ENCODE measurements at regions of chr4 and their contacts with region 1.

Region 1: GRCh38 chr4:184263910-184264732 is 46.4 kb upstream of the ENPP6 start:
- DNase-seq: peak; percentile 93
- ATAC-seq: peak; percentile 42
- H3K4me3 ChIP-seq: no peak overlapping the region
- H3K4me3 Mint-ChIP-seq: peak overlapping the region; percentile 42
- H3K27ac ChIP-seq: peak overlapping the region in 1 of 2 donors; percentile 24
- H3K27ac Mint-ChIP-seq: peak overlapping the region; percentile 51
- H3K4me1 ChIP-seq: peaks cover 32 to 37% of the 10 kb centered on the region in 2 donors
- H3K4me1 Mint-ChIP-seq: peaks cover 41% of the 10 kb centered on the region
- H3K27me3 ChIP-seq: no peaks in the 10 kb centered on the region
- H3K27me3 Mint-ChIP-seq: no peaks in the 10 kb centered on the region
- CTCF ChIP-seq: peak; percentile 86

Region 2: GRCh38 chr4:183876268-183876934 is 387.7 kb before region 1 on chr4:
- CTCF ChIA-PET with region 1: no interaction called
- POLR2A ChIA-PET with region 1: no interaction called
- intact Hi-C with region 1: no loop called
- DNase-seq: no peak
- ATAC-seq: no peak
- H3K4me3 ChIP-seq: no peak overlapping the region
- H3K4me3 Mint-ChIP-seq: no peak overlapping the region
- H3K27ac ChIP-seq: no peak overlapping the region
- H3K27ac Mint-ChIP-seq: no peak overlapping the region
- H3K4me1 ChIP-seq: no peaks in the 10 kb centered on the region
- H3K4me1 Mint-ChIP-seq: no peaks in the 10 kb centered on the region
- H3K27me3 ChIP-seq: no peaks in the 10 kb centered on the region
- H3K27me3 Mint-ChIP-seq: peaks cover 12% of the 10 kb centered on the region
- CTCF ChIP-seq: no peak

Region 3: DNA sequence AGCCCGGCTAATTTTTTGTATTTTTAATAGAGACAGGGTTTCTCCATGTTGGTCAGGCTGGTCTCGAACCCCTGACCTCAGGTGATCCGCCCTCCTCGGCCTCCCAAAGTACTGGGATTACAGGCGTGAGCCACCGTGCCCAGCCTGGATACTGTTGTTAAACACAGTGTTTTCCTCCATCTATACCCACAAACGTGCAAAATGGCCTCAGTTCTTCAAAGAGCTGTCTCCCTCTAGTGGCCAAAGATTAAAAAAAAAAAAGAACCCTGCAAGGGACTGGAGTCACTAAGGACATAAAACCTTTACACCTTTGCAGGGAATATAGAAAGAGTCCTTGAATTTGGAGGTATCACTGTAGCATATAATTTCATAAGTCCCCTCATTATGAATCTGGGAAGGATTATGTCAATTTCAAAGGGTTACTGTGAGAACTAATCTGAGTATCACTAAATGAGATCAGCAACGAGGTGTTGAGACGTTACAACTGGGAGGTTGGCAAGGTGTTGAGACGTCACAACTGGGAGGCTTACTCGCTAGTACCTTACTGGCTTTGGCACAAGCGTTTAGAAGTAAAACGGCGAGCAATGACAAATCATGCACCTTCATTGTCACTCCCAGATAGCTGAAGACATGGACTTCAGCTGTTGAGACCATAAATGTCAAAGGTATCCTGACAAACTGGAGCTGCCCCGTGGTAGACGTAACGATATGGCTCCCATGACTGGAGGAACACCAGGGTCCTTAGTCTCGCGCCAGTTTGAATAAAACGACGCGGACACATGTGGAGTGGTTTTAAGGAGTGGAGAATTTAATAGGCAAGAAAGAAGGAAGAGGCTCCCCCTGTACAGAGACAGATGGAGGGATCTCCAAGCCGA is 13.1 kb before region 1 on chr4:
- CTCF ChIA-PET with region 1: interaction called, 20 read pairs
- POLR2A ChIA-PET with region 1: no interaction called
- intact Hi-C with region 1: no loop called
- DNase-seq: peak; percentile 66
- ATAC-seq: peak; percentile 57
- H3K4me3 ChIP-seq: no peak overlapping the region
- H3K4me3 Mint-ChIP-seq: no peak overlapping the region
- H3K27ac ChIP-seq: no peak overlapping the region
- H3K27ac Mint-ChIP-seq: no peak overlapping the region
- H3K4me1 ChIP-seq: no peaks in the 10 kb centered on the region
- H3K4me1 Mint-ChIP-seq: no peaks in the 10 kb centered on the region
- H3K27me3 ChIP-seq: peaks cover 0 to 2% (median 0%) of the 10 kb centered on the region in 4 experiments
- H3K27me3 Mint-ChIP-seq: peaks cover 5% of the 10 kb centered on the region
- CTCF ChIP-seq: peak; percentile 73

Region 4: DNA sequence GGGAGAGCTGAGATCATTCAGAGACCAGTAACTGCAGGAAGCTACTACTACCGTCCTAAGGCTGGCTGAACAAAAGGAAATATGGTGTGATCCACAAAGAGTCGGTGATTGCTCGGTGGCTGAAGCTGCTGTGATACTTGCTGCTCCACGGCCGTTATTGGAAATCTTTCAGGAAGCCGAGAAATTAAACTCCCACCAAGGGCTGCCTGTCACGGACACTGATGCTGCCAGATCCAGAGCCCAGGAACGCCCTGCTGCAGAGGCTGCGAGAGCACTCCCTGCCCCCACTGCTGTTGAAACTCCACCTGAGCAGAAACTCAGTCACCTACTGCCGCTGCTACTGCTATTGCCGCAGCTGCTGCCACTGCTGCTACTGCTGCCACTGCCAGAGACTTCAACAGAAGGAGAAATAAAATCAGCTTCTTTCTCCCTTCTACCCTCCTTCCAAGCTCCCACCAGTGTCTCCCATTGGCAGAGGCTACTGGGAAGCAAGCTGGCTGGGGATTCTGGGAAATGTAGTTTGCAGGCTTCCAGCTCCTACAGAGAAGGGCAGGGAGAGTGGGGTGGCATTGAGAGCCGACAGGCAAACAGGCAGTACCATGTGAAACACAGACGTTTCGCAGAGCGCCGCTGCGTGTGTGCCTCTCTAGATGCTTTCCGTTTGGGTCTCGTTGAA is 79.5 kb after region 1 on chr4:
- CTCF ChIA-PET with region 1: interaction called, 12 read pairs
- POLR2A ChIA-PET with region 1: interaction called, 4 read pairs
- intact Hi-C with region 1: loop called (anchors 5 kb)
- DNase-seq: peak; percentile 67
- ATAC-seq: peak; percentile 37
- H3K4me3 ChIP-seq: peak overlapping the region; percentile 55 to 70 (median 62)
- H3K4me3 Mint-ChIP-seq: peak overlapping the region; percentile 92
- H3K27ac ChIP-seq: peak overlapping the region; percentile 54 to 75
- H3K27ac Mint-ChIP-seq: peak overlapping the region; percentile 87
- H3K4me1 ChIP-seq: peaks cover 66 to 71% of the 10 kb centered on the region in 2 donors
- H3K4me1 Mint-ChIP-seq: peaks cover 68% of the 10 kb centered on the region
- H3K27me3 ChIP-seq: no peaks in the 10 kb centered on the region
- H3K27me3 Mint-ChIP-seq: no peaks in the 10 kb centered on the region
- CTCF ChIP-seq: no peak

Region 5: DNA sequence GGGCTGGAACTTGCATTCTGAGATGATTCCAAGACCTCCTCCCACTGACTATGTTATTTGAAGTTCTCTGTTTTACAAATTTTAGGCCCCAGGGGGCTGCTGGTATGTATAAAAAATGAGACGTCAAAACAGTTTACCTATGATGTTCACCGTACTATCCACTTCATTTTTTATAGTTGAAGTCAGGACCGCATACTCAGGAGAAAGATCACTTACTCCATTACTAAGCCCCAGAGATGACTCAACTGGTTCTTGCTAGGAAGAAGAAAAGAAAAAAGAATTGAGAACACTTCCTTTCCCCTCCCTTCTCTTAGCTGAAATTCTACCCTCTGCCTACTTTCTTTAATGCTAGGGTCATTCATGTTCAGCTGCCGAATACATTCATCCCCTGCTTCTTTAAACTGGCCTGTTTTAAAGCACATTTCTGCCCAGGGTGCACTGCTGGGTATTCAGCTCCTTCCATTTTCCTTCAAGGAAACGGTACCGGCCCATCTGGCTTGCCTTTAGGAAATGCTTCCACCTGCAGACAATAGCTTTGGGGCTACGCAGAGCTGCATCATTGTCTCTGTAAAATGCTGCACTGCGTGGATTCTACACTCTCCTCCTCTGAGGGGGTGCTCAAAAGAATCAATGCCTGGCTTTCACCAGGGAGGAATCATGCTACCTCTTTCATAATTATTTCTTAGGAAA is 144.0 kb after region 1 on chr4:
- CTCF ChIA-PET with region 1: interaction called, 17 read pairs
- POLR2A ChIA-PET with region 1: no interaction called
- intact Hi-C with region 1: no loop called
- DNase-seq: no peak
- ATAC-seq: no peak
- H3K4me3 ChIP-seq: no peak overlapping the region
- H3K4me3 Mint-ChIP-seq: no peak overlapping the region
- H3K27ac ChIP-seq: no peak overlapping the region
- H3K27ac Mint-ChIP-seq: peak overlapping the region; percentile 16
- H3K4me1 ChIP-seq: peaks cover 40 to 42% of the 10 kb centered on the region in 2 donors
- H3K4me1 Mint-ChIP-seq: peaks cover 55% of the 10 kb centered on the region
- H3K27me3 ChIP-seq: no peaks in the 10 kb centered on the region
- H3K27me3 Mint-ChIP-seq: no peaks in the 10 kb centered on the region
- CTCF ChIP-seq: no peak

Region 6: GRCh38 chr4:184506527-184507121 is 242.5 kb after region 1 on chr4:
- CTCF ChIA-PET with region 1: interaction called, 23 read pairs
- POLR2A ChIA-PET with region 1: no interaction called
- intact Hi-C with region 1: loop called (anchors 1 kb)
- DNase-seq: peak; percentile 82
- ATAC-seq: peak; percentile 99
- H3K4me3 ChIP-seq: peak overlapping the region in 1 of 5 experiments; percentile 24
- H3K4me3 Mint-ChIP-seq: peak overlapping the region; percentile 61
- H3K27ac ChIP-seq: peak overlapping the region; percentile 48 to 69
- H3K27ac Mint-ChIP-seq: peak overlapping the region; percentile 81
- H3K4me1 ChIP-seq: peaks cover 43 to 48% of the 10 kb centered on the region in 2 donors
- H3K4me1 Mint-ChIP-seq: peaks cover 45% of the 10 kb centered on the region
- H3K27me3 ChIP-seq: no peaks in the 10 kb centered on the region
- H3K27me3 Mint-ChIP-seq: no peaks in the 10 kb centered on the region
- CTCF ChIP-seq: peak; percentile 73

Region 7: DNA sequence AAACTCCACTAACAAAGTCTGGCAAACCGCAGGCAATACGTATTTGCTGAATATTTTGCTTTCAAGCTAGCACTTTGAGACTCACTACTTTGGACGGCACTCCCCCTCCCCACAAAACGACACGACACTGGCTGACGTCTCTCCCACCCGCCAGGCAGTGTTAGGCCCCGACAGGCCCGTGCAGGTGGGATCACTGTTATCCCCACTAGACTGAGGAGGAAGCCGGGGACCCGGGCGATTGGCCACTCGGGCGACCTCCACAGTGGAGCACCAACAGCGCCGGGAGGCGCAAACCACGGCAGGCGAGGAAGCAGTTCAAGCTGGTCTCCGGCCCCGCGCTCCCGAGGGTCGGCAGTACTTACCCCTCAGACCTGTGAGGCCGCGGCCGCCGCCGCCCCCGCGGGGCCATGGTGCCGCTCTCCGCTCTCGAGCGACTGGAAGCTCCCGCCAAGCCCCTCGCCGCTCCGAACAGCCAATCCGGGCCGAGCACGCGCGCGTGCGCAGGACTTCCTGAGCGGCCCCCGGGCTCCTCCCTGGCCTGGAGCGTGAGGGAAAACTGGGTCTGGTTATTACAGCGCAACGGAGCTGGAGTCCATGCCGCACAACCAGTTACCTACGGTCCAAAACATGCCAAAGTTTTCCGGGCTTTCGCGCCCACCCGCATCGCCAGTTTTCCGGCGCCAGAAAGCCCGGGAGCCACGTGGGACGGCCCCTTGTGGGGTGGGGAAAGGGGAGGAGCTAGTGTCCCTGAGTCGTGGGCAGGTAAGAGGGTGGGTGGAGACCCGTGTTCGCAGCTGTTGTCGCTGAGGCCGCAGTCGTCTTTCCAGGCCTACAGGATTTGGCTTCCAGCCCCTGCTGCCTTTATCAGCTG is 469.8 kb after region 1 on chr4 and contains the start of gene CENPU:
- CTCF ChIA-PET with region 1: interaction called, 10 read pairs
- POLR2A ChIA-PET with region 1: interaction called, 5 read pairs
- intact Hi-C with region 1: loop called (anchors 1 kb)
- DNase-seq: peak; percentile 96
- ATAC-seq: peak; percentile 95
- H3K4me3 ChIP-seq: peak within 1 kb of the TSS; percentile 65 to 76 (median 72)
- H3K4me3 Mint-ChIP-seq: peak within 1 kb of the TSS; percentile 93
- H3K27ac ChIP-seq: peak within 1 kb of the TSS; percentile 1 to 52
- H3K27ac Mint-ChIP-seq: peak within 1 kb of the TSS; percentile 93
- H3K4me1 ChIP-seq: peaks cover 7 to 12% of the 10 kb centered on the region in 2 donors
- H3K4me1 Mint-ChIP-seq: peaks cover 16% of the 10 kb centered on the region
- H3K27me3 ChIP-seq: no peaks in the 10 kb centered on the region
- H3K27me3 Mint-ChIP-seq: no peaks in the 10 kb centered on the region
- CTCF ChIP-seq: no peak
- total RNA-seq, gene CENPU: 1.6 and 3.2 TPM in 2 replicates

Region 8: DNA sequence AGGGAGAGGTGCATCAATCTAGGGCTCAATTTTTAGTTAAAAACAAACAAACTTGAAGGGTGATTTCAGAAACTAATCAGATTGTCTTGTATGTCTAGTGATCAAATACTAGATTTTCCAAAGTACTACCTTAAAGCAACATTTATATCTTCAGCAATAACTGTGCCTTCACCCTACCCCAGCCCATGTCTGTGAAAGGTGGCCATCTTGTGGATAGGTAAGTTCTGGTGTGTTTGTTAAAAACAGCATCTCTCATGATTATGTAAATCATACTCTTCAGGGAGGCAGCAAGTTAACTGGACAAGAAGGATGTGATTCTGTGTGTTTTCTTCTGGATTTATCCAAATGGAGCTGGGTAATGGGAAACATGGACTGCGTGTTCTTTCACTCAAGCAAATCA is 643.1 kb after region 1 on chr4:
- CTCF ChIA-PET with region 1: interaction called, 5 read pairs
- POLR2A ChIA-PET with region 1: no interaction called
- intact Hi-C with region 1: loop called (anchors 5 kb)
- DNase-seq: peak; percentile 30
- ATAC-seq: peak; percentile 80
- H3K4me3 ChIP-seq: no peak overlapping the region
- H3K4me3 Mint-ChIP-seq: no peak overlapping the region
- H3K27ac ChIP-seq: no peak overlapping the region
- H3K27ac Mint-ChIP-seq: no peak overlapping the region
- H3K4me1 ChIP-seq: no peaks in the 10 kb centered on the region
- H3K4me1 Mint-ChIP-seq: peaks cover 4% of the 10 kb centered on the region
- H3K27me3 ChIP-seq: no peaks in the 10 kb centered on the region
- H3K27me3 Mint-ChIP-seq: peaks cover 1% of the 10 kb centered on the region
- CTCF ChIP-seq: peak; percentile 38